Ascending aorta (tissue), 2 donors: ENCODE measurements at regions of chr3 and their contacts with region 1.

Region 1: GRCh38 chr3:48472915-48473616 is 26.5 kb downstream of the ATRIP start:
- DNase-seq: peak; percentile 84 to 97
- H3K4me3 ChIP-seq: peak overlapping the region; percentile 60 to 78
- H3K27ac ChIP-seq: peak overlapping the region; percentile 96 to 98
- H3K4me1 ChIP-seq: peaks cover 4 to 33% of the 10 kb centered on the region in 2 donors
- H3K27me3 ChIP-seq: no peaks in the 10 kb centered on the region
- CTCF ChIP-seq: peak in 1 of 3 experiments; percentile 43

Region 2: DNA sequence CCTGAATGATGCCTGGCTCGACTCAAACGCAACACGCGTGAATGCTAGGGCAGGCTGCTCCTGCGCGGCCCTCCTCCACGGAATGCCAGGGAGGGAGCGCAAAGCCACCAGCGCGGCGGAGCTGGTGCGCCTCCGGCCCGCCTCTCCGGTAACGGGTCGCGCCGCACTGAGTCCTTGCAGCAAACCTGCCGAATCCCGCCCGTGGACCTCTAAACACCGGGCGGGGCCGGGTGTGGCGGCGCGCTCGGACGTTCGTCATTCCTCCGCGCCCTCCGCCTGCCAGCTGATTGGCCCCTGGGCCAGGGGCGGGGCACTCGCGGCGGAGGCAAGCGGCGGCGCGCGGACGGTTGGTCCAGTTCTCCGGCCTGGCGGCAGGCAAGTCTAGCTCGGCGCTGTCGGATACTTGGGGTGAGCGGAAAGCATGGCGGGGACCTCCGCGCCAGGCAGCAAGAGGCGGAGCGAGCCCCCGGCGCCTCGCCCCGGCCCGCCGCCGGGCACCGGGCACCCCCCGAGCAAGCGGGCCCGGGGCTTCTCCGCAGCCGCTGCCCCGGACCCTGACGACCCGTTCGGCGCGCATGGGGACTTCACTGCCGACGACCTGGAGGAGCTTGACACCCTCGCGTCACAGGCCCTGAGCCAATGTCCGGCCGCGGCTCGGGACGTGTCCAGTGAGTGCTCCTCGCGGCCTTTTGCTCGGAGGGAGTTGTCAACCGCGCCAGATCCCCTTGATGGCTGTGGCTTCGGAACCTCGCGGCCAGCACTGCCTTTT is 26.5 kb before region 1 on chr3 and contains the start of gene ATRIP:
- intact Hi-C with region 1: loop called (anchors 1 kb)
- DNase-seq: peak in 1 of 2 donors; percentile 95
- H3K4me3 ChIP-seq: peak within 1 kb of the TSS; percentile 74 to 94
- H3K27ac ChIP-seq: peak within 1 kb of the TSS; percentile 89 to 91
- H3K4me1 ChIP-seq: peaks cover 4 to 17% of the 10 kb centered on the region in 2 donors
- H3K27me3 ChIP-seq: no peaks in the 10 kb centered on the region
- CTCF ChIP-seq: no peak
- total RNA-seq, gene ATRIP: 9.0 TPM

Region 3: GRCh38 chr3:48507351-48508061 is 34.4 kb after region 1 on chr3:
- intact Hi-C with region 1: loop called (anchors 1 kb)
- DNase-seq: peak; percentile 35 to 81
- H3K4me3 ChIP-seq: no peak overlapping the region
- H3K27ac ChIP-seq: peak overlapping the region; percentile 69 to 76
- H3K4me1 ChIP-seq: peaks cover 0 to 23% of the 10 kb centered on the region in 2 donors
- H3K27me3 ChIP-seq: no peaks in the 10 kb centered on the region
- CTCF ChIP-seq: peak; percentile 34 to 58 (median 52)

Region 4: GRCh38 chr3:48595526-48596121 is 122.6 kb after region 1 on chr3:
- intact Hi-C with region 1: no loop called
- DNase-seq: peak; percentile 66 to 91
- H3K4me3 ChIP-seq: peak overlapping the region; percentile 44 to 73
- H3K27ac ChIP-seq: peak overlapping the region; percentile 94 to 95
- H3K4me1 ChIP-seq: peaks cover 24 to 50% of the 10 kb centered on the region in 2 donors
- H3K27me3 ChIP-seq: no peaks in the 10 kb centered on the region
- CTCF ChIP-seq: no peak

Region 5: GRCh38 chr3:48945891-48946549 is 473.0 kb after region 1 on chr3:
- intact Hi-C with region 1: no loop called
- DNase-seq: no peak
- H3K4me3 ChIP-seq: no peak overlapping the region
- H3K27ac ChIP-seq: no peak overlapping the region
- H3K4me1 ChIP-seq: no peaks in the 10 kb centered on the region
- H3K27me3 ChIP-seq: no peaks in the 10 kb centered on the region
- CTCF ChIP-seq: no peak